Ascending aorta (tissue), 2 donors: ENCODE measurements at regions of chr5 and their contacts with region 1.

Region 1: DNA sequence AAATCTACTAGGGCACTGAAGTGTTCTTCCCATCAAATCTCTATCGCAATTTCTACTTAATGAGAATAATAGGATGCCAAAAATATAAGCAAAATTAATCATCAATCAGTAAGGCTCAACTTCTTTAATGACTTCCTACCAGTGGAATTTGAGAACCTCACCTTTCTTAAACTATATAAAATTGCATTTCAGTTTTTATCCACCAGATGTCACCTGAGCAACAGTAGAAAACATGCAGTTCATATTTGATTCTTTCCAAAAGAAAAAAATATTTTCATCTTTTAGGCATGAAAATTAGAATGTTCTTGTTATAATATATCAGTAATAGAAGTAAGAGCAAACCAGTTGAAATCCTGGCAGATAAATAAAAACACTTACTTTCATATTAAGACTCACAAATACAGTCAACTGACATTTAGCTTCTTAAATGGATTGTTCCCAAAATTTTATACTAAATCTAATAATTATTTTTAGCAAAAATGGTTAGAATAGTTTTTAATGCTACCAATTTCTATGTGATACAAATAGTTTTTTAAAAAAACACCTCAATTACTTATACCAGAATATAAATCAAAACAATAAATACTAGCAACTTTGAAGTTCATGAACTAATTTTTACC is 13.4 kb upstream of the CCDC112 start:
- DNase-seq: no peak
- H3K4me3 ChIP-seq: no peak overlapping the region
- H3K27ac ChIP-seq: no peak overlapping the region
- H3K4me1 ChIP-seq: no peaks in the 10 kb centered on the region
- H3K27me3 ChIP-seq: no peaks in the 10 kb centered on the region
- CTCF ChIP-seq: peak; percentile 44 to 68 (median 61)

Region 2: GRCh38 chr5:115296124-115297022 is 13.5 kb before region 1 on chr5 and contains the start of gene CCDC112:
- intact Hi-C with region 1: no loop called
- DNase-seq: peak; percentile 40 to 82
- H3K4me3 ChIP-seq: peak within 1 kb of the TSS; percentile 79 to 100
- H3K27ac ChIP-seq: no peak within 1 kb of the TSS
- H3K4me1 ChIP-seq: peaks cover 0 to 3% of the 10 kb centered on the region in 2 donors
- H3K27me3 ChIP-seq: no peaks in the 10 kb centered on the region
- CTCF ChIP-seq: no peak
- total RNA-seq, gene CCDC112: 10.4 TPM

Region 3: DNA sequence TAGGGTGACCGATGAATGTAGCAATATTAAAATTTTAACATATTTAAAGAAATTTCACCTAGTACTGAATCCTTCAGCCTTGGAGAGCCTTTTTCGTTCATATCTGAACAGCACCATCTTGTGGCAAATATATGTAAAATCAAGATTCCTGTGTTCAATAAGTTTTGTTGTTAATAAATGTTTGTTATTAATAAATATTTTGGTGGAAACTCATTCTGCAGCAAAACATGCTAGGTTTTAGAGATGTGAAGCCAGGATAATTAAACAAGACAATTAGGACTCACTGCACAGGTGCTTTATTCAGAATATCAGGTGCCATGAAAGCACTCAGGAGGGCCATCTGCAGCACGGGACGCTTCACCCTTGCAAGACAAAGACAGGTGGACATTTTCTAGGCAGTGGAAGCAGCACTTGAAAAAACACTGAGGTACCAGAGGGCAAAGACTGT is 276.8 kb after region 1 on chr5:
- intact Hi-C with region 1: loop called (anchors 1 kb)
- DNase-seq: no peak
- H3K4me3 ChIP-seq: no peak overlapping the region
- H3K27ac ChIP-seq: no peak overlapping the region
- H3K4me1 ChIP-seq: no peaks in the 10 kb centered on the region
- H3K27me3 ChIP-seq: no peaks in the 10 kb centered on the region
- CTCF ChIP-seq: peak; percentile 33 to 64 (median 55)

Region 4: DNA sequence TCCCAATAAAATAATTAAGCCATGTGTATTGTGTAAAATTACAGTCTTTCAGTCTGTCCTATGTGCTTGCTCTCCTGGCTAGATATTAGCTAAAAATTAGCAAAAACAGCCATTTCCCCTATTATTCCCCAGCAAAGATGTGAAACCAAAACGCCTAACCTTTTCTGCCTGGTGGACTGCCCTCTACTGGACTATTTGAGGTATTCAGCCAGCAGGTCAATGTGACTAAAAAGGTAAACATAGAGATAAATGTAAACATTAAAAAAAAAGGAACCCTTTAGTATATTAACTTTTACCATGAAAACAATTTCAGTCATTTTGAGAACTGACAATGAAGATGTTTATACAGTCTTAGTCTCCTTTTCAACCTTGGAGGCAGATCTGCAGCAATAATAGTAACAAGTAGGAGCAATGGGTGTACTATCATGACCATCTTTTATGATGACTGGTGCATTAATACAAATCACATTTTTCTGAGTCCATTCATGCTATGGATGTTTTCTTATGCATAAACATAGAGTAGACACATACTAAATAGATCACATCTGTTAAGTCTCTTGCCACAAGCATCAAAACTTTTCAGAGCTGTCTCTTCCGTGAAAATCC is 521.4 kb after region 1 on chr5:
- intact Hi-C with region 1: loop called (anchors 5 kb)
- DNase-seq: no peak
- H3K4me3 ChIP-seq: no peak overlapping the region
- H3K27ac ChIP-seq: no peak overlapping the region
- H3K4me1 ChIP-seq: peaks cover 0 to 3% of the 10 kb centered on the region in 2 donors
- H3K27me3 ChIP-seq: no peaks in the 10 kb centered on the region
- CTCF ChIP-seq: peak; percentile 48 to 79 (median 75)

Region 5: DNA sequence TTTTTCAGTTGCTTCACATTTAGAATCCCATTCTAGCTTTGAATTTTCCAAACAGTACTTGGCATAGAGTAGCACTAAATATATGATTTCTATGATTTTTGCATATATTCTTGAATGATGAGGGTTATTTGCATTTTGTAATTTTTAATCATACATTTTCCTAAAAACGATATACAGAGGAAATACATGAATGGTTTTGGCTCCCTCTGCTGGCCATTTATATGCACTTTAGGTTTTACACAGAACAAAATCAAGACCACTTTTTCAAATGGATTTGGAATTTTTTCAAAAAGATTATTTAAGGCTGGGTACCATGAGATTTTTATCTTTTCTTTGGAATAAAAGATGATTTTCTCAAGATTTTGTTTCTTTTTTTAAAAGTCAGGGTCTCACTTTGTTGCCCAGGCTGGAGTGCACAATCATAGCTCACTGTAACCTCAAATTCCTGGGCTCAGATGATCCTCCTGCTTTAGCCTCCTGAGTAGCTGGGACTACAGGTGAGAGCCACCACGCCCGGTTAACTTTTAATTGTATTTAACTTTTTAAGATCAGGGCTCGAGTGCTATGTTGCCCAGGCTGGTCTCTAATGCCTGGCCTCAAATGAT is 758.3 kb after region 1 on chr5:
- intact Hi-C with region 1: loop called (anchors 2 kb)
- DNase-seq: no peak
- H3K4me3 ChIP-seq: no peak overlapping the region
- H3K27ac ChIP-seq: no peak overlapping the region
- H3K4me1 ChIP-seq: no peaks in the 10 kb centered on the region
- H3K27me3 ChIP-seq: no peaks in the 10 kb centered on the region
- CTCF ChIP-seq: peak; percentile 39 to 84 (median 77)